HAP-1 (cell line): ENCODE measurements at regions of chr16 and their contacts with region 1.

Region 1: GRCh38 chr16:84617791-84618580 is at the start of gene COTL1:
- DNase-seq: peak; percentile 84 to 97
- H3K4me3 ChIP-seq: peak within 1 kb of the TSS; percentile 68
- H3K4me1 ChIP-seq: peaks cover 9% of the 10 kb centered on the region
- H3K27me3 ChIP-seq: no peaks in the 10 kb centered on the region

Region 2: DNA sequence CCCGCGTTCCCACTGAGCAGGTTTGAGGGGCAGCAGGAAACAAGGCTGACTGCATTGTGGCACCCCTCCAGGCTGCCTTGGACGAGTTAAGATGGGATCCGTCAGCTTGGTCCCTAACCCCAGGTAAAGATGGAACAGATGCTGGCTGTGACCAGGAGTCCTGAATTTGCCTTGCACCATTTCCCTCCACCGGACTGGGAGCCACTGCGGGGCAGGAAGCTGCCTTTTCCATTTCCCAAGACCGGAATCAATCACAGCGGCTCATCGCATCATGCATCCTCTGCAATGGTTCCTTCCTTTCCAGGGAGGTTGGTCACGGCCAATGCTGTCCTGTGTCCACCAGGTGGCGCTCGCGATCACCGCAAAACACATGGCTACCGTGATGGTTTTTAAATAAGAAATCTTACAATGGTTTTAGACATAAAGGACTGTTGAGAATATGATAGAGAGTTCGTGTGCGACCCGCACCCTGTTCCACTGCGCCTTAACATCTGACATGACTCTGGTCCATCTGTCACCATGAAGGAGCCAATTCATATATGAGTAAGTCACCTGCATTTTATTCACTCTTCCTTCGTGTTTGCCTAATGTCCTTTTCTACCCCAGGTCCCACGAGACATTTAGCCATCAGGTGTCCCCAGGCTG is 106.7 kb before region 1 on chr16:
- in situ Hi-C with region 1: loop called (anchors 5 kb)
- DNase-seq: peak; percentile 80 to 86
- H3K4me3 ChIP-seq: no peak overlapping the region
- H3K4me1 ChIP-seq: peaks cover 7% of the 10 kb centered on the region
- H3K27me3 ChIP-seq: no peaks in the 10 kb centered on the region

Region 3: GRCh38 chr16:84836234-84836647 is 218.3 kb after region 1 on chr16:
- in situ Hi-C with region 1: no loop called
- DNase-seq: no peak
- H3K4me3 ChIP-seq: no peak overlapping the region
- H3K4me1 ChIP-seq: no peaks in the 10 kb centered on the region
- H3K27me3 ChIP-seq: peaks cover 3% of the 10 kb centered on the region; the same call in 1 of the 2 replicates